ENCODE measurements at regions of chr6 and their contacts with region 1.

Region 1: GRCh38 chr6:85593438-85594196 is at the start of gene SNX14:
- DNase-seq: peak; percentile 81 to 94 (median 92)
- H3K4me3 ChIP-seq: peak within 1 kb of the TSS; percentile 67 to 98 (median 86)
- H3K27ac ChIP-seq: peak within 1 kb of the TSS; percentile 75 to 98 (median 93)
- H3K27me3 ChIP-seq: no peaks in the 10 kb centered on the region
- CTCF ChIP-seq: peak in 21 of 56 donors; percentile 4 to 47 (median 23)
- total RNA-seq, gene SNX14: 64.2 to 128 (median 96.7) TPM

Region 2: GRCh38 chr6:85642774-85643536 is 49.3 kb after region 1 on chr6 and contains the start of gene SYNCRIP:
- intact Hi-C with region 1: loop called (anchors 1 kb)
- DNase-seq: peak; percentile 94 to 99 (median 98)
- H3K4me3 ChIP-seq: peak within 1 kb of the TSS; percentile 72 to 100 (median 96)
- H3K27ac ChIP-seq: peak within 1 kb of the TSS; percentile 87 to 99 (median 98)
- H3K27me3 ChIP-seq: no peaks in the 10 kb centered on the region
- CTCF ChIP-seq: peak in 2 of 56 donors; percentile 6 to 18
- total RNA-seq, gene SYNCRIP: 36.9 to 66.3 (median 53.8) TPM